HCT116 (cell line): ENCODE measurements at regions of chr5 and their contacts with region 1.

Region 1: DNA sequence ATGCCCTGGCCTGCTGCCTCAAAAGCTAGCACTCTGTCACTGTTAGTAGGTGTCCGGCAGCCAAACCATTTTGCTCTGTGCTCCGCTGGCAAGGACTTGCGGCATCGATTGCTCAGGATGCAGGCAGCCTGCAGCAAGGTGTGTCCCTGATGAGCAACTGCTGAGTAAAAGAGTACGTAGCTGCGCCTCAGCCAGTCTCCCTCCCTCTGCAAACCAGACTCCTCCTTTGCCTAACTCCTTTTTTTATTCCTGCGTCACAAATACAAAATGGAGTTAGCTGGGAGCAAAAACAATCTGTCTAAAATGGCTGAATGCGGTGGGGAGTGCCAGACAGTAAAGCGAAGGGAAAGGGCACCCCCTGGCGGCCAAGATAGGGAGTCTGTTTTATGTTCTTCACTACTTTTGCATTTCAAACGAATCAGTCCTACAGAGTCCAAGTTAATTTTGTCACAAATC is 61.1 kb downstream of the DIAPH1 start:
- DNase-seq: peak; percentile 95
- ATAC-seq: peak; percentile 96
- H3K4me3 ChIP-seq: peak overlapping the region; percentile 25 to 39
- H3K27ac ChIP-seq: peak overlapping the region; percentile 59
- H3K4me1 ChIP-seq: peaks cover 0 to 21% of the 10 kb centered on the region in 2 experiments; a peak in 2 of 4 replicates
- H3K27me3 ChIP-seq: no peaks in the 10 kb centered on the region
- CTCF ChIP-seq: peak; percentile 82 to 96 (median 93)
- POLR2A ChIP-seq: no peak
- RAD21 ChIP-seq: peak; percentile 95

Region 2: DNA sequence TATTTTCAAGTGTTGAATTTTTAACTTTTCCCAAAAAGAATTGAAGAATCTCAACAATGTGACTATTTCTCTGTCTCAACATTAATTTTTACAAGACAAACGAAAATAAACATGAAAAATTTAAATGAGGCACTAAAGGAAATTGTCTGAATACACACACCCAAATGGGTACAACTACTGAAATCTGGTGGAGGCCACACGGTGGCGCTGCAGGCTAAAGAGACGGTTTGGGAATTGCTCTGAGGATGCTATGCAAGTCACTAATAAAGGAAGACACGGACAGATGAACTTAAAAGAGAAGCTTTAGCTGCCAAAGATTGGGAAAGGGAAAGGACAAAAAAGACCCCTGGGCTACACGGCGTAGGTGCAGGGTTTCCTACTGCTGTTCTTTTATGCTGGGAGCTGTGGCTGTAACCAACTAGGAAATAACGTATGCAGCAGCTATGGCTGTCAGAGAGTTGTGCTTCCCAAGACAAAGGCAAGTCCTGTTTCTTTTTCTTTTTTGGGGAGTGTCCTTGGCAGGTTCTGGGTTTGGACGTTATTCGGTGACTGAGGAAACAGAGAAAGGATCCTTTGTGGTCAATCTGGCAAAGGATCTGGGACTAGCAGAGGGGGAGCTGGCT is 365.5 kb before region 1 on chr5 and contains the start of gene PCDHB10:
- CTCF ChIA-PET with region 1: interaction called, 3 read pairs
- POLR2A ChIA-PET with region 1: no interaction called
- RAD21 ChIA-PET with region 1: no interaction called
- intact Hi-C with region 1: loop called (anchors 2 kb)
- DNase-seq: peak; percentile 32
- ATAC-seq: peak; percentile 61; the same call in 1 of the 2 replicates
- H3K4me3 ChIP-seq: no peak within 1 kb of the TSS
- H3K27ac ChIP-seq: no peak within 1 kb of the TSS
- H3K4me1 ChIP-seq: no peaks in the 10 kb centered on the region
- H3K27me3 ChIP-seq: no peaks in the 10 kb centered on the region
- CTCF ChIP-seq: peak; percentile 46 to 85 (median 68); a peak in 5 of 6 replicates
- POLR2A ChIP-seq: no peak
- RAD21 ChIP-seq: peak; percentile 75
- total RNA-seq, gene PCDHB10: not detected

Region 3: GRCh38 chr5:141223112-141223783 is 334.5 kb before region 1 on chr5 and contains the start of gene PCDHB14:
- CTCF ChIA-PET with region 1: interaction called, 8 read pairs
- POLR2A ChIA-PET with region 1: no interaction called
- RAD21 ChIA-PET with region 1: no interaction called
- intact Hi-C with region 1: loop called (anchors 1 kb)
- DNase-seq: peak; percentile 38
- ATAC-seq: no peak
- H3K4me3 ChIP-seq: no peak within 1 kb of the TSS
- H3K27ac ChIP-seq: no peak within 1 kb of the TSS
- H3K4me1 ChIP-seq: no peaks in the 10 kb centered on the region
- H3K27me3 ChIP-seq: no peaks in the 10 kb centered on the region
- CTCF ChIP-seq: peak; percentile 14 to 46 (median 42); a peak in 2 of 6 replicates
- POLR2A ChIP-seq: no peak
- RAD21 ChIP-seq: peak; percentile 69
- total RNA-seq, gene PCDHB14: 0.27 TPM

Region 4: GRCh38 chr5:141412854-141413539 is 144.7 kb before region 1 on chr5 and contains the start of gene PCDHGA10:
- CTCF ChIA-PET with region 1: interaction called, 69 read pairs
- POLR2A ChIA-PET with region 1: interaction called, 6 read pairs
- RAD21 ChIA-PET with region 1: interaction called, 7 read pairs
- intact Hi-C with region 1: no loop called
- DNase-seq: peak; percentile 71
- ATAC-seq: peak; percentile 89
- H3K4me3 ChIP-seq: peak within 1 kb of the TSS; percentile 46 to 61
- H3K27ac ChIP-seq: peak within 1 kb of the TSS; percentile 44
- H3K4me1 ChIP-seq: peaks cover 2 to 5% of the 10 kb centered on the region in 2 experiments; a peak in 1 of 4 replicates
- H3K27me3 ChIP-seq: no peaks in the 10 kb centered on the region
- CTCF ChIP-seq: peak; percentile 84 to 96 (median 86)
- POLR2A ChIP-seq: no peak
- RAD21 ChIP-seq: peak; percentile 94
- total RNA-seq, gene PCDHGA10: 3.8 TPM

Region 5: GRCh38 chr5:141524604-141525597 is 32.8 kb before region 1 on chr5:
- CTCF ChIA-PET with region 1: interaction called, 9 read pairs
- POLR2A ChIA-PET with region 1: no interaction called
- RAD21 ChIA-PET with region 1: no interaction called
- intact Hi-C with region 1: loop called (anchors 1 kb)
- DNase-seq: peak; percentile 88
- ATAC-seq: peak; percentile 74
- H3K4me3 ChIP-seq: no peak overlapping the region
- H3K27ac ChIP-seq: no peak overlapping the region
- H3K4me1 ChIP-seq: peaks cover 35 to 53% of the 10 kb centered on the region in 2 experiments
- H3K27me3 ChIP-seq: no peaks in the 10 kb centered on the region
- CTCF ChIP-seq: peak; percentile 99 to 100 (median 99)
- POLR2A ChIP-seq: no peak
- RAD21 ChIP-seq: peak; percentile 98

Region 6: GRCh38 chr5:141968914-141969608 is 411.4 kb after region 1 on chr5 and contains the start of gene RNF14:
- CTCF ChIA-PET with region 1: no interaction called
- POLR2A ChIA-PET with region 1: no interaction called
- RAD21 ChIA-PET with region 1: no interaction called
- intact Hi-C with region 1: no loop called
- DNase-seq: peak; percentile 83
- ATAC-seq: peak; percentile 97
- H3K4me3 ChIP-seq: peak within 1 kb of the TSS; percentile 74 to 83
- H3K27ac ChIP-seq: peak within 1 kb of the TSS; percentile 83
- H3K4me1 ChIP-seq: peaks cover 6 to 16% of the 10 kb centered on the region in 2 experiments
- H3K27me3 ChIP-seq: no peaks in the 10 kb centered on the region
- CTCF ChIP-seq: peak; percentile 44 to 79 (median 67); a peak in 5 of 6 replicates
- POLR2A ChIP-seq: peak; percentile 34
- RAD21 ChIP-seq: no peak; the same call in 1 of the 2 replicates
- total RNA-seq, gene RNF14: 37.5 TPM